Cardiac septum (tissue), 1 donor: ENCODE measurements at regions of chr3 and their contacts with region 1.

Region 1: GRCh38 chr3:8607234-8608040 is 37.2 kb downstream of the SSUH2 start:
- DNase-seq: peak; percentile 83

Region 2: DNA sequence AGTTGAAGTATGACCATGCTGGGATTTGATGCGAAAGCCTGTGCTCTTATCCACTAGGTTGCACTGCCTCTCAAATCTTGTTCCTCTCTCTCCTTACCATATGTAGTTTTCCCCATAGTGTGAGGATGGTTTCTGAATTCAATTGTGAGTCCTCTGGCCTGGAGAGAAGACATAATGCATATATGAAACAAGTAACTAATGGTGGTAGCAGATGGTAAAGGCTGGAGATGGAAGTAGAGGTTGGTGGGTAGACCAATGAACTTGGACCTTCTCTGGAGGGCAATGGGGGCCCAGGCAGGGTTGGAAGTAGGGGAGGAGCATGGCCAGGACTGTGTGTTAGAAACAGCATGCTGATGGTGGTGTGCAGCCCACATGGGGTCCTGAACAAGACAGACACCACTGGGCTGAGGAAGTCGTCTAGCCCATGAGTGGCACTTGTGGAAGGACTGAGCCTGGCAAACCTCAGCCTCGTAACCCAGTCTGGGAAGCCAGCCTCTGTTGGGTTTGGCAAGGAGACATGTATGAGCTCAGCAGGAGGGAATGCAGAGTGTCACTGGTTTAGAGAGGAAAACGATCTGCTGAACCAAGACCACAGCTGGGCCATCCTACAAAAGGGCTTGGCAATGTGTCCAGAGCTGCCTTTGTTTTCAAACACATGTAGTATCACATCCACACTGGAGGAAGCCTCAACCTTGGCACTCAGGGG is 124.3 kb before region 1 on chr3:
- intact Hi-C with region 1: loop called (anchors 2 kb)
- DNase-seq: peak; percentile 84

Region 3: DNA sequence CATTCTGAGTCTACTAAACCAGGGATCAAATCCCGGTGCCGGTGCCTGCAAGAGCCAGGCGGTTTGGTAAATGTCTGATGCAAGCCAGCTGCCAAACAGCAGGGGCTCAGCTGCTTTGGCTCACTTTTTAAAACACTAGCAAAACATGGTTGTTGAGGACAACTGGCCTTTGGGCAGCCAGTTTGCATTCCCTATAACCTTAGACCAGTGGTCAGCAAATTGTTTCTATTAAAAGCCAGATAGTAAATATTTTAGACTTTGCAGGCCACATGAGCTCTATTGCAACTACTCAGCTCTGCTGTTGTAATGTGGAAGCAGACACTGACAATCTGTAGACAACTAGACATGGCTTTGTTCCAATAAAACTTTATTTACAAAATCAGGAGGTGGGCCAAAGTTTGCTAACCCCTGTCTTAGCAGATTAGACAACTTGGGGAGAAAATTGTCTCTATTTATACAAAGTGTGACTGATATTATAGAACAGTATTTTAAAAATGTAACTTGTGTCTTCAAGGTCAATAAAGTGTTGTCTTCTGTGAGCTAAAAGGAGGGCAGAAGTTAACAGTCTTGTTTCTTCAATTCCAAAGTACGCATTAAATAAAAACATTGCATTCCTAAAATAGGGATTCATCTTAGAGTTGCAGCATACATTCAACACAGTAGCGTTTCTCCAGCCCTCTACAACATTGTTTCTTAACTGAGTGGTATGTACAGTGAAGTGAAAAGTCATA is 30.4 kb before region 1 on chr3:
- intact Hi-C with region 1: no loop called
- DNase-seq: peak; percentile 67

Region 4: GRCh38 chr3:8784676-8785435 is 177.4 kb after region 1 on chr3:
- intact Hi-C with region 1: no loop called
- DNase-seq: no peak